Endothelial cell of umbilical vein (primary cell): ENCODE measurements at regions of chr6 and their contacts with region 1.

Region 1: DNA sequence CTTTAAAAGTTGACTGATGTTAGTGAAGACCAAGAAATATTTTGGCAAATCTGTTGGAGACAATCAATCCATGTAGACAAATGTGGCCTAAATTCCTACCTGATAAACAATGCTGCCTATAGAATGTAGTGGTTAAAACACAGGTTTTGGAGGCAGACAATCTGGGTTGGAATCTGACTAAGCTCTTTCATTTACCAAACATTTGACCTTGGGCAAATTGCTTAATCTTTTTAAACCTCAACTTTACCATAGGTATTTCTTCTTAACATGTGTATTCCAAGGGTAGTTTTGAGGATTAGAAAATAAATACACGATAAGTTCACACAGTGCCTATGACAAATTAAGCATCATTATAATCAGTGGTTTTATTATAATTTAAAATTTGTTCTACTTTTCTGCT is 11.5 kb downstream of the RHAG start:
- DNase-seq: no peak
- H3K4me3 ChIP-seq: no peak overlapping the region
- H3K27ac ChIP-seq: no peak overlapping the region
- H3K4me1 ChIP-seq: no peaks in the 10 kb centered on the region
- H3K27me3 ChIP-seq: peaks cover 0 to 2% of the 10 kb centered on the region in 2 experiments
- CTCF ChIP-seq: no peak
- POLR2A ChIP-seq: no peak

Region 2: GRCh38 chr6:49202924-49203536 is 422.1 kb before region 1 on chr6:
- CTCF ChIA-PET with region 1: no interaction called
- POLR2A ChIA-PET with region 1: no interaction called
- dilution Hi-C with region 1: no loop called
- intact Hi-C with region 1: no loop called
- DNase-seq: no peak
- H3K4me3 ChIP-seq: no peak overlapping the region
- H3K27ac ChIP-seq: no peak overlapping the region
- H3K4me1 ChIP-seq: no peaks in the 10 kb centered on the region
- H3K27me3 ChIP-seq: peaks cover 0 to 2% of the 10 kb centered on the region in 2 experiments
- CTCF ChIP-seq: no peak
- POLR2A ChIP-seq: no peak

Region 3: GRCh38 chr6:49639177-49639817 is 14.2 kb after region 1 on chr6:
- CTCF ChIA-PET with region 1: interaction called, 16 read pairs
- POLR2A ChIA-PET with region 1: no interaction called
- dilution Hi-C with region 1: no loop called
- intact Hi-C with region 1: no loop called
- DNase-seq: no peak
- H3K4me3 ChIP-seq: no peak overlapping the region
- H3K27ac ChIP-seq: no peak overlapping the region
- H3K4me1 ChIP-seq: no peaks in the 10 kb centered on the region
- H3K27me3 ChIP-seq: no peaks in the 10 kb centered on the region
- CTCF ChIP-seq: no peak
- POLR2A ChIP-seq: no peak

Region 4: GRCh38 chr6:49849213-49849907 is 224.2 kb after region 1 on chr6:
- CTCF ChIA-PET with region 1: interaction called, 82 read pairs
- POLR2A ChIA-PET with region 1: no interaction called
- dilution Hi-C with region 1: no loop called
- intact Hi-C with region 1: loop called (anchors 1 kb)
- DNase-seq: peak; percentile 47
- H3K4me3 ChIP-seq: no peak overlapping the region
- H3K27ac ChIP-seq: no peak overlapping the region
- H3K4me1 ChIP-seq: no peaks in the 10 kb centered on the region
- H3K27me3 ChIP-seq: no peaks in the 10 kb centered on the region
- CTCF ChIP-seq: peak; percentile 9 to 19
- POLR2A ChIP-seq: no peak